Posterior cingulate gyrus (tissue), 11 donors: ENCODE measurements at regions of chr20 and their contacts with region 1.

Region 1: DNA sequence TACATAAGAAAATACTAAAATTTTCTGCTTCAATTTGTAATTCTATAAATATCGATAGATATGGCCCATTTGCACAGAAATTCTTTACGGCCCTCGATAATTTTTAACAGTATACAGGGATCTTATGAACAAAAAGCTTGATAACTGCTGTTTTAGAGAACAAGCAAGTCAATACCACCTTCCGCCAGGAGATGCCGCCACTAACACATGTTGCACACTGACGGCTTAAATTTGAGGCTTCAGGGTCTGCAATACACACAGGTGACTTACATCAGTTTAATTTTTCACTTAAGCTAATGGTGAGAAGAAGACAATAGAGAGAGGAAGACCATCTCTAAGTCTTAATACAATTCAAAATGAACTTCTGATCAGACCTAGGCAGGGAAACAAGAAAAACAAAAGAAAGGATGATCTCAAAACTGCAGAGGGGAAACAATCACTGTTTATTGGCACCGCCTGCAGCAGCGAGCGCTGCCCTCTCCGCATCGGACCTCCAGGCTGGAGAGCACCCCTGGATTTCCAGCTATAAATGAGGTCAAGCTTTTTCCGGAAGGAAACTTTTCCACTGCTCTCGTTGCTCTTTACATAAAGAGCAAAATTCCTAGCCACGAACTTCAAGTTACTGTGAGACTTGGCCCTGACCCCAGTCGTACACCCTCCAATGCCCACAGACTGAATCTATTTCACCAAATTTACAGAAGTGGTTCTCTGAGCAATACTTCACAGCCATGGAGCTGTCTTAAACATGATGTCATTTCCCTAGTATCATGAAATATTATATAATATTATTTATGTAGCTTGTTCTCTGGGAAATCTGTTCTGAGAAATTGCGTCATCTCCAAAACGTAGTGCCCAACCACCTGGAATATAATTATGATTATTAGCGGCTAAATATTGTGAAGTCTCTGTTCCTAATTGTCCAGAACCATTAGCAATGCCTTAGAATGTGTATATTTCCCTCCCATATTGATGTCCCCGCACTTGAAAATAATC is 54.1 kb downstream of the OTOR start:
- DNase-seq: peak; percentile 51 to 95 (median 80)

Region 2: GRCh38 chr20:17431621-17432364 is 629.6 kb after region 1 on chr20:
- intact Hi-C with region 1: loop called (anchors 1 kb)
- DNase-seq: peak; percentile 53 to 96 (median 70)

Region 3: GRCh38 chr20:17938871-17939619 is 1136.8 kb after region 1 on chr20:
- intact Hi-C with region 1: loop called (anchors 10 kb)
- DNase-seq: peak; percentile 44 to 95 (median 68)